ENCODE measurements at regions of chr1 and their contacts with region 1.

Region 1: GRCh38 chr1:75991497-75992114 is 59.4 kb upstream of the ASB17 start:
- DNase-seq: peak; percentile 81
- H3K4me3 ChIP-seq: no peak overlapping the region
- H3K27ac ChIP-seq: no peak overlapping the region
- H3K4me1 ChIP-seq: no peaks in the 10 kb centered on the region
- H3K27me3 ChIP-seq: peaks cover 2 to 3% of the 10 kb centered on the region in 2 experiments
- CTCF ChIP-seq: peak; percentile 71 to 78
- POLR2A ChIP-seq: no peak

Region 2: GRCh38 chr1:75884437-75884836 is 107.2 kb before region 1 on chr1:
- CTCF ChIA-PET with region 1: no interaction called
- POLR2A ChIA-PET with region 1: no interaction called
- dilution Hi-C with region 1: no loop called
- intact Hi-C with region 1: no loop called
- DNase-seq: no peak
- H3K4me3 ChIP-seq: no peak overlapping the region
- H3K27ac ChIP-seq: no peak overlapping the region
- H3K4me1 ChIP-seq: no peaks in the 10 kb centered on the region
- H3K27me3 ChIP-seq: no peaks in the 10 kb centered on the region
- CTCF ChIP-seq: no peak
- POLR2A ChIP-seq: no peak

Region 3: DNA sequence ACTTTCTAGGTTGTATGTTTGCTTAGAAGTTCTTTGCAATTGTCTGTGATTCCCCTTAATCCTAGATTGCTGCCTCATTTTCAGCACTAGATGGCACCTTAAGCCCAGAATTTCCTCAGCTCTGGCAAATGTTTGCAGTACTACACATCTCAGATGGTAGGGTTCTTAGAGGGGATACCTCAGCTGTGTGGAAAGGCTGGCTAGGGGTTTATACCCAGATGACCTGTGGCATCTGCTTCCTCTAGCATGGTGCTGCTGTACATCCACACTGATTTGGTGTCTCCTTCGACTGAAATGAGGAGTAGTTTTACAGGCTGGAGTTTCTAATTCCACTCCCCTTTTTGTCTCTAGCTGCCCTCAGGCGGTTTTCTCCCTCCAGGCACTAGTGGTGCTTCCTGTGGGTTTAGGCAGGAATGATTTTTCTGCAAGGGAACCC is 82.9 kb before region 1 on chr1:
- CTCF ChIA-PET with region 1: interaction called, 9 read pairs
- POLR2A ChIA-PET with region 1: no interaction called
- dilution Hi-C with region 1: no loop called
- intact Hi-C with region 1: loop called (anchors 2 kb)
- DNase-seq: peak; percentile 60
- H3K4me3 ChIP-seq: no peak overlapping the region
- H3K27ac ChIP-seq: no peak overlapping the region
- H3K4me1 ChIP-seq: no peaks in the 10 kb centered on the region
- H3K27me3 ChIP-seq: no peaks in the 10 kb centered on the region
- CTCF ChIP-seq: peak; percentile 30 to 45
- POLR2A ChIP-seq: no peak

Region 4: DNA sequence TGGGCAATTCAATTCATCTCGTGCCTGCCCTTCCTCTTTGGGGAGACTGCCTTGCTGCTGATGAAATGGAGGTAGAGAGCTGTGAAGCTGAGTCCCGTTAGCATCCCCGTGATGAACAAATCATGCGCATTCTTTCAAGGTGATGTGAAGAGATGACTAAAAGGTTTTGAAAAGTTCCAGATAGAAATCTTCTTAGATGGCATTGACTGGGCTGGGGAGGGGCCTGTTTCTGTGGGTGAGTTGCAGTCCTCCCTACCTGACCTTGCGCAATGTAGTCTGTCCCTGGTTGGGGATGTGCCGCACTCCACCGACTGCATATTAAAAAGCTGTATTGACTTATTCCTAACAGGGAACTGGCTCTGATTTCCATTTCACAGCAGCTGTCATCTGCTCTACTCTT is 132.6 kb after region 1 on chr1:
- CTCF ChIA-PET with region 1: no interaction called
- POLR2A ChIA-PET with region 1: no interaction called
- dilution Hi-C with region 1: no loop called
- intact Hi-C with region 1: no loop called
- DNase-seq: no peak
- H3K4me3 ChIP-seq: no peak overlapping the region
- H3K27ac ChIP-seq: no peak overlapping the region
- H3K4me1 ChIP-seq: no peaks in the 10 kb centered on the region
- H3K27me3 ChIP-seq: no peaks in the 10 kb centered on the region
- CTCF ChIP-seq: no peak
- POLR2A ChIP-seq: no peak

Region 5: GRCh38 chr1:76140227-76140626 is 148.6 kb after region 1 on chr1:
- CTCF ChIA-PET with region 1: no interaction called
- POLR2A ChIA-PET with region 1: no interaction called
- dilution Hi-C with region 1: no loop called
- intact Hi-C with region 1: loop called (anchors 2 kb)
- DNase-seq: no peak
- H3K4me3 ChIP-seq: no peak overlapping the region
- H3K27ac ChIP-seq: no peak overlapping the region
- H3K4me1 ChIP-seq: peaks cover 10% of the 10 kb centered on the region
- H3K27me3 ChIP-seq: no peaks in the 10 kb centered on the region
- CTCF ChIP-seq: peak in 1 of 2 donors; percentile 21
- POLR2A ChIP-seq: no peak

Region 6: GRCh38 chr1:76713535-76713934 is 721.9 kb after region 1 on chr1:
- CTCF ChIA-PET with region 1: no interaction called
- POLR2A ChIA-PET with region 1: no interaction called
- dilution Hi-C with region 1: no loop called
- intact Hi-C with region 1: no loop called
- DNase-seq: no peak
- H3K4me3 ChIP-seq: no peak overlapping the region
- H3K27ac ChIP-seq: no peak overlapping the region
- H3K4me1 ChIP-seq: no peaks in the 10 kb centered on the region
- H3K27me3 ChIP-seq: peaks cover 0 to 2% of the 10 kb centered on the region in 2 experiments
- CTCF ChIP-seq: no peak
- POLR2A ChIP-seq: no peak

Measured in endothelial cell of umbilical vein (primary cell).